Psoas muscle (tissue), 8 donors: ENCODE measurements at regions of chr1 and their contacts with region 1.

Region 1: GRCh38 chr1:19811206-19811851 is 3.8 kb downstream of the RNF186 start:
- DNase-seq: peak; percentile 43 to 59
- ATAC-seq: peak in 1 of 4 donors; percentile 55
- H3K4me3 ChIP-seq: no peak overlapping the region
- H3K27ac ChIP-seq: no peak overlapping the region
- H3K4me1 ChIP-seq: no peaks in the 10 kb centered on the region
- H3K27me3 ChIP-seq: no peaks in the 10 kb centered on the region
- CTCF ChIP-seq: peak; percentile 40

Region 2: DNA sequence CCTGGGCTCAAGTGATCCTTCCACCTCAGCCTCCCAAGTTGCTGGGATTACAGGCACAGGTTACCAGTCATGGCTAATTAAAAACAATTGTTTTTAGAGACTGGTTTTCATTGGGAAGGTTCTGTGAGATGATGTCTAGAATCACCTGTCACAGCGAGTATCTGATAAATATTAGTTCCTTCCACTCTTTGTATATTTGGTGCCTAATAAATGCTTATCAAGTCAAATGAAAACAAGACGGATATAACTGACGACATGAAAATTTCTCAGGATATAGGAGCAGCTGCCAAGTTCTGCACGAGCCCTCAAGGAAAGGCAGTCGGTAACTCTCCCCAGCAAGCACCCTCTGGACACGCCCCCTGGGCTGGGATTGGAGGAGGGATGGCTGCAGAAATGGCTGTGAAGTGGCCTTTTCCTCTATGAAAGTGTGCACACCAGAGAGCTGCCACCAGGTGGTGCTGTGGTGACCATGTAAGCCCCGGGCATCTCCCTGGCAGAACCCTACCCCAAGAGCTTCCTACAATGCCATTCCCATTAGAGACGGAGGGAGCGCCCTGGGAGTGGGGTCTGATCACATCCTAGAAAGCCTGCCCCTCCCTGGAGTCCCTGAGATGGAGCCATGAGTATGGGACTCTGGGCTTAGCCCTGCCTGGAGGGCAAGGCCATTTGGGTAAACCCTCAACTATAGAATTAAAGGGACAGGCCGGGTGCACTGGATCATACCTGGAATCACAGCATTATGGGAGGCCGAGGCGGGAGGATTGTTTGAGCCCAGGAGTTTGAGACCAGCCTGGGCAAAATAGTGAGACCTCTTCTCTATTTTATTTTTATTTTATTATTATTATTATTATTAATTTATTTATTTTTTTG is 95.8 kb before region 1 on chr1:
- intact Hi-C with region 1: loop called in 1 of 2 experiments (anchors 5 kb)
- DNase-seq: peak; percentile 90 to 91
- ATAC-seq: peak; percentile 95 to 98 (median 96)
- H3K4me3 ChIP-seq: no peak overlapping the region
- H3K27ac ChIP-seq: no peak overlapping the region
- H3K4me1 ChIP-seq: no peaks in the 10 kb centered on the region
- H3K27me3 ChIP-seq: no peaks in the 10 kb centered on the region
- CTCF ChIP-seq: peak; percentile 76

Region 3: DNA sequence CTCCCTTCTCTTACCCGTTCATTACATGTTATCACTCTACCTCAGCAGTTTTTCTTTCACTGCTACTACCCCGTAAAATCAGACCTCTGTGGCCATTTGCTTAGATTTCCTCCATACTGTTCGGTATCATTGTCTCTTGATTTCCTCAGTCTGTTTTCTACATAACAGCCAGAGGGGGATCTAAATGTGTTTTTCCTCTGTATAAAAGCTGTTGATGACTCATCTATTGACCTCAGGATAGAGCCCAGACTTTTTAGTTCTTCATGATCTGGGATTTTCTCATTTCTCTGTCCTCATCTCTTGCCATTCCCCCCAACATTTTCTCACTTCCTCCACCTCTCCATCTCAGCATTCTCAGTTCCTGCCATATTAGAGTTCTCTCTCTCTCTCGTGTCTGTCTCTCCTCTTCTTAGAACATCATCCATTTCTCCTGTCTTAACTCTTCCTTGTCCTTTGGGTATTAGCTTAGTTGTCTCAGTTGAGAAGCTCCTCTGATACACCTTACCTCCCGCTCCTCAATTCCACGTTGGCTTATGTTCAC is 81.4 kb after region 1 on chr1:
- intact Hi-C with region 1: no loop called
- DNase-seq: no peak
- ATAC-seq: no peak
- H3K4me3 ChIP-seq: no peak overlapping the region
- H3K27ac ChIP-seq: no peak overlapping the region
- H3K4me1 ChIP-seq: no peaks in the 10 kb centered on the region
- H3K27me3 ChIP-seq: no peaks in the 10 kb centered on the region
- CTCF ChIP-seq: no peak